ENCODE measurements at regions of chr7 and their contacts with region 1.

Region 1: GRCh38 chr7:45923290-45923689 is 2.2 kb upstream of the IGFBP3 start:
- DNase-seq: peak; percentile 79
- ATAC-seq: peak; percentile 36 to 68

Region 2: DNA sequence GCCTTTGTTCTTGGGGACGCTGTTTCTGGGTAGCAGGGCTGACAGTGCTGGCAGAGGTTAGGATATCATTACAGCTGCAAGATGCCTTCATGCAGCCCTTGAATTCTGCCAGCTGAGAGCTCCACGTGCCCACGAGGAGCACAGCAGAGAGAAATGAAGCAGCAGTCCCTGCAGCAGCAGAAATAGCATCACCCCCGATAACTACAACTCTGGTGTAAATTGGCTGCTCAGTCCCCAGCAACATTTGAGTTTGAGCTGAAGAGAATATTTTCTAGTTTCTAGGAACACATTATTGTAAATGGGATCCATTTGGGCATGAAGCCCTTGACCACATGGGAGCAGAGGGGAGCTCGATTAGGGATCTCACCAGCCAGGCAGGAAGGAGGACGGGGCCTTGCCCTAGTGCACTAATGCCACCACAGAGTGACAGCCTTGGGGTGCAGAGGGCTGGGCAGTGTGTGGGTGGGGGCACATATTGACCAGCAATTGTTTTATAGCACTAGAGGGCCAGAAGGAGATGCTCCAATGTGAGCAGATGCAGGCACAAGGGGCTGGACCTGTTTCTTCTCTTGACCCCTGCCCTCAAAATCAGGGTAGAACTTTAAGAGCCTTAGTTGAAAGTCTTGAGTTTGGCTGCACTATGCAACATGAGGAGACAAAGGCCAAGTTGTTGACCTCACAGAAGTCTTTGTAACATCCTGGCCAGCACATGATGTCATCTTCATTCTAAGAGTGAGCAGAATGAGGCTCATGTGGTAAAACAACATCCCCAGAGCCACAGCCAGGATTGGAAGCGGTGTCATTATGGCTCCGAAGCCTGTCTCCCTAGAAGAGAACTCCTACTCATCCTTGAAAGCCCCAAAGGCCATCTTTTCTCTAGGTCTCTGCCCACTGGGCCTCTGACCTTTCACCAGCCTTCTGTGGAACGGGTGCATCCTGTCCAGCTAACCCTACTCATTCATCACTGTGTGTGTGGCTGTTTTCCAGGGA is 296.6 kb before region 1 on chr7:
- intact Hi-C with region 1: no loop called
- DNase-seq: no peak
- ATAC-seq: no peak

Region 3: DNA sequence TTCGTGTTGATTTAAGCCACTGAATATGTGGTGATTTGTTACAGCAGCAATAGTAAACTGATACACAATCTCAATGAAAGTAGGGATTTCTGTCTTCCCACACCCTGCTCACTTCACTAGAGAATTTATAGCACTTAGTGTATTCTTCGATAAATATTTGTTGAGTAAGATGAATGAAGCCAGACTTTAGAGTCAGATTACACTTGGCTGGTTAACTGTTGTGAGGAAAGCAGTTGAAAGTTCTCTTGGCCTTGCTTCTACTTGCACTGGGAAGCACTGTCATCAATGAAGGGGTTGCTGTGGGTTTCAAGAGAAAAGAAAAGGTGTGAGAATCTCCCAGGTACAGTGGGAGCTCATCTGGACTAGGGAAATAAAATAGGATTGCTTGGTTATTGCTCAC is 79.9 kb after region 1 on chr7:
- intact Hi-C with region 1: no loop called
- DNase-seq: no peak
- ATAC-seq: no peak

Region 4: DNA sequence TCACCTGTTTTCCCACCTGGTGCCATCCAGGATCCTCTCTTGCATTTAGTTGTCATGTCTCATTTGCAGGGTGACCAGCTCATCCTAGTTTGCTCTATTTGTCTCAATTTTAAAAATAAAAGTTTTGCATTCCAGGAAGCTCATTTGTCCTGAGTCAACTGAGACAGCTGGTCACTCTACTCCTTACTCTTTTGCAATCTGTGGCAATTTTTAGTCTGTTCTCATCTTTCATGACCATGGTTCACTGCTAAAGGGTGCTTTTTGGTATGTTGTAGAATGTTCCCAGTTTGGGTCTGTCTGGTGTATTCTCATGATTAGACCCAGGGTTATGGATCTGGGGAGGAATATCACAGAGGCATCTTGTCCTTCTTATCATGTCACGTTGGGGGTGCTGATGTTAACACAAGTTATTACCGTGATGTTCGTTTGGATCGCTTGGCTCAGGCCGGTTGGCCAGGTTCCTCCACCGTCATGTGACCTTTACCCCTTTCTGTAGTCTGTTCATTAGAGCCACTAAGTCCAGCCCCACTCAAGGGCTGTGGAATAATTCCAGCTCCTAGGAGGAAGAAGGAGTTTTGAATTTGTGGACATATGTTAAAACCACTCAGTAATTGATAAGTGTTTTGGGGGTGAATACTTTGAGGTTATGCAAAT is 101.1 kb after region 1 on chr7:
- intact Hi-C with region 1: no loop called
- DNase-seq: no peak
- ATAC-seq: no peak

Region 5: GRCh38 chr7:46115410-46115809 is 192.1 kb after region 1 on chr7:
- intact Hi-C with region 1: no loop called
- DNase-seq: no peak
- ATAC-seq: peak in 1 of 2 donors; percentile 44

Region 6: DNA sequence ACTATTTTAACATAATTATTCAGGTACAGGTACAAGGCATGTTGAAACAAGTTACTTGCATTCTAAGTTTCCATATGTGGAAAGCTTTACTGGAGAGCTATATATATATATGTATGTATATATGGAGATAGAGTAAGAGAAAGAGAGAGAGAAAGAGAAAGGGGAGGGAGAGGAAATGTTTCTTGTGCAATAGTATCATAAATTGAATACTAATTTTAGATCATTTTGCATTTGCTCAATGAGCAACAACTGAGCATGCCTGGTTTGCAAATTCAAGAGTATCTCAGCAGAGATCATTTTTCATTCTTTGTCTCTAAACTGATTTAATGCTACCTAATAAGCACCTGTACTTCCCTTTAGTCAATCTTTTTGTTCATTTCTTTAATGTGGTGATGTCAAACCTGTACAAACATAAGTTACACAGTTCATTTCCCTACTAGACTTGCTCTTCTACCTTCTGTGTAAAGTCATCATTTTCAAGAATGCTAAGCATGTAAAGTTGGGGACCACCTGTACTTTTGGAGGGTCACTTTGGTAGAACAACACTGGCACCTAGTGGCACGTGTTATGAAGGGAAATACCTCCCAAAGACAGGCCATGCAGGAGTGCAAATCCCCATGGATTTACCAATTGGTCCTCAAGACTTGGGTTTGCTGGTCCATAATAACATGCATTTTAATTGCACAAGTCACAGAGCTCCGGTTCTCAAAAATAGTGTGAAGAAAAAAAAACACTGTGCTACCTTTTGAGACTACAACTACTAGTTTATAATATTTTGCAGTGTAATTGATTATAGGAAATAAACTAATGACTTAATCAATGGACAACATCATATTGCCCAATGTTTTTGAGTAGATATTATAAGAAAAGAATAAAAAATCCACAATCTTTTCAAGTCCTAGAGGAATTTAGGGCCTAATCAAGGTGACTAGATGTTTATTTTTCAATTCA is 429.0 kb after region 1 on chr7:
- intact Hi-C with region 1: loop called (anchors 1 to 2 kb)
- DNase-seq: peak; percentile 28
- ATAC-seq: peak; percentile 50 to 57

Region 7: GRCh38 chr7:47088329-47089067 is 1165.2 kb after region 1 on chr7:
- intact Hi-C with region 1: loop called (anchors 2 to 5 kb)
- DNase-seq: peak; percentile 67
- ATAC-seq: peak; percentile 90 to 91

Region 8: GRCh38 chr7:47239931-47240421 is 1316.7 kb after region 1 on chr7:
- intact Hi-C with region 1: loop called (anchors 5 to 10 kb)
- DNase-seq: no peak
- ATAC-seq: no peak

Region 9: GRCh38 chr7:47254081-47255006 is 1331.1 kb after region 1 on chr7:
- intact Hi-C with region 1: loop called in 1 of 2 experiments (anchors 5 kb)
- DNase-seq: peak; percentile 89
- ATAC-seq: peak; percentile 93 to 94

Measured in left cardiac atrium (tissue), 4 donors.